Motor neuron (in vitro differentiated cells): ENCODE measurements at regions of chr1 and their contacts with region 1.

Region 1: GRCh38 chr1:7646981-7647901 is 123.9 kb upstream of the VAMP3 start:
- ATAC-seq: peak; percentile 50 to 87 (median 66)
- H3K4me3 ChIP-seq: no peak overlapping the region
- H3K27ac ChIP-seq: peak overlapping the region; percentile 44 to 66
- H3K4me1 ChIP-seq: peaks cover 44 to 49% of the 10 kb centered on the region in 2 donors

Region 2: DNA sequence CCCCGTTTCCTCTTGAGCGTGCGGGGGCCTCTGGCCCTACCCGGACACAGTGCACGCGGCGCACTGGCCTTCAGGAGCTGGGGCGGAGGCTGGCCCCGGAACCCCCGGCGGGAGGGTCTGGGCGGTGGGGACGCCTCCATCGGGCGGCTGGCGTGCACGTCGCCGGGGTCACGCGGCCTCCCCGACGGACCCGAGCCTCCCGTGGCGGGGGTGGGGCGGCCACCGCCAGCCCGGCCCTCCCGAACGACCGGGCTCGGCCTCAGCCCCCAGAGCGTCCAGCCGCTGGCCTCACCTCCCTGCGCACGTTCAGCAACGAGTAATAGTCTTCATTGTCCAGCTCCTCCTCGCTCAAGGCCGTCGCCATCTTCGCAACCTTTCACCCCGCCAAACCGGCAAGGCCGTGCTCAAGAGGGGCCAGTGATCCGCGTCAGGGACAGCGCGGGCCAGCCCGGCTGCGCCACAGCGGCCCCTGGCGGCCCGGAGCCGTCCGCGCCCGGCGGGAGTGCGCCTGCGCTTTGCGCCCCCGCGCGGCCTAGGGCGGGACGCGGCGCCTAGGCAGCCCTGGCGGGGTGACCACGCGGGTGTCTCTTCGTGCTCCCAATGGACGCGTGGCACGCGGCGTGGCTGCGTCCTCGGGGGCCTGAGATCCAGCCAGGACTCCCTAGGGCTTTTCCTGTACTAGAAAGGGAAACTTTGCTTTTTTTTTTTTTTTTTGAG is 945.6 kb before region 1 on chr1 and contains the start of gene DNAJC11:
- in situ Hi-C with region 1: loop called in 1 of 9 experiments (anchors 25 kb)
- ATAC-seq: peak; percentile 89 to 96 (median 94)
- H3K4me3 ChIP-seq: peak within 1 kb of the TSS; percentile 65 to 96 (median 73)
- H3K27ac ChIP-seq: peak within 1 kb of the TSS; percentile 90 to 91
- H3K4me1 ChIP-seq: peaks cover 8 to 11% of the 10 kb centered on the region in 2 donors
- total RNA-seq, gene DNAJC11: 25.9 to 87.2 (median 45.7) TPM

Region 3: DNA sequence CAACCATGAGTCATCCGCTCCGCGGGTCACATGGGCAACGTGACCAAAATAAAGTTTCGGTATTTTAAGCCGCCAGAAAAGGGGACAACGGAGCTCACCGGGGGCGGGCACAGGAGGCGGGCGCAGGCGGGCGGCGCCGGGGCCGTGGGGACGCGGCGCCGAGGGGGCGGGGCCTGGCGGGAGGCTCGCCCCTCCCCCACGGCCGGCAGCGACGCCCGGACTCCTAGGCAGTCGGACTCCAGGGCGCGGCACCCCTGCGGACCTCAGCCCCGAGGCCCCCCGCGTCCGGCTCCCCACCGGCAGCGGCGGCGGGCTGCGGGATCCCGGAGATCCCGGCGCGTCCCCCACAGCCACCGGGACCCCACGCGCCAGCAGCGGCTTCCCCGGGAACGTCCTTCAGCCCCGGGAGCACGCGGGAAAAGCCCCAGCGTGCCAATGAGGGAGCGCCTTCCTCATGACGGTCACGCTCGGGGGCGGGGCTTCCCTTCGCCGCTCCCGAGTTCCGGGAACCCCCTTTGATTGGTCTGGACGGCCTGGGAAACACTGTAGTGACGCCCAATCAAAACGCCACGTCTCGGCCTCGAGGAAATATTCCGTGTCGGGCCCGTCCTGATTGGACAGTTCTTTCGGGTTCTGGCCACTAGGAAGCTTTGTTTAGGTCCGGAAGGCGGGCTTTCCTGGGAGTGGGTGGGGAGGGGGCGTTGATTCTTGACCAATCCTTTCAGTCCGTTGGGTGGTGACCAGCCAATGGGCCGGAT is 862.5 kb before region 1 on chr1:
- in situ Hi-C with region 1: loop called in 1 of 9 experiments (anchors 25 kb)
- ATAC-seq: peak; percentile 80 to 88 (median 86)
- H3K4me3 ChIP-seq: peak overlapping the region; percentile 65 to 97 (median 82)
- H3K27ac ChIP-seq: peak overlapping the region; percentile 89 to 90
- H3K4me1 ChIP-seq: peaks cover 7 to 16% of the 10 kb centered on the region in 2 donors

Region 4: GRCh38 chr1:7070389-7071029 is 576.7 kb before region 1 on chr1:
- in situ Hi-C with region 1: loop called in 2 of 9 experiments (anchors 25 kb)
- ATAC-seq: peak; percentile 75 to 98 (median 84)
- H3K4me3 ChIP-seq: peak overlapping the region in 4 of 5 donors; percentile 0 to 23 (median 16)
- H3K27ac ChIP-seq: no peak overlapping the region
- H3K4me1 ChIP-seq: peaks cover 15 to 17% of the 10 kb centered on the region in 2 donors

Region 5: GRCh38 chr1:7224644-7225043 is 422.6 kb before region 1 on chr1:
- in situ Hi-C with region 1: loop called in 2 of 9 experiments (anchors 25 kb)
- ATAC-seq: no peak
- H3K4me3 ChIP-seq: no peak overlapping the region
- H3K27ac ChIP-seq: no peak overlapping the region
- H3K4me1 ChIP-seq: peaks cover 6% of the 10 kb centered on the region in 2 donors

Region 6: GRCh38 chr1:7726623-7727022 is 79.4 kb after region 1 on chr1:
- in situ Hi-C with region 1: no loop called
- ATAC-seq: no peak
- H3K4me3 ChIP-seq: no peak overlapping the region
- H3K27ac ChIP-seq: no peak overlapping the region
- H3K4me1 ChIP-seq: peaks cover 10 to 18% of the 10 kb centered on the region in 2 donors